ENCODE measurements at regions of chr14 and their contacts with region 1.

Region 1: GRCh38 chr14:21987937-21988336 is 314.3 kb upstream of the OR4E1 start:
- DNase-seq: peak; percentile 52
- H3K4me3 Mint-ChIP-seq: no peak overlapping the region
- H3K27ac Mint-ChIP-seq: no peak overlapping the region
- H3K4me1 Mint-ChIP-seq: no peaks in the 10 kb centered on the region
- H3K27me3 Mint-ChIP-seq: peaks cover 76% of the 10 kb centered on the region
- CTCF ChIP-seq: peak; percentile 28

Region 2: DNA sequence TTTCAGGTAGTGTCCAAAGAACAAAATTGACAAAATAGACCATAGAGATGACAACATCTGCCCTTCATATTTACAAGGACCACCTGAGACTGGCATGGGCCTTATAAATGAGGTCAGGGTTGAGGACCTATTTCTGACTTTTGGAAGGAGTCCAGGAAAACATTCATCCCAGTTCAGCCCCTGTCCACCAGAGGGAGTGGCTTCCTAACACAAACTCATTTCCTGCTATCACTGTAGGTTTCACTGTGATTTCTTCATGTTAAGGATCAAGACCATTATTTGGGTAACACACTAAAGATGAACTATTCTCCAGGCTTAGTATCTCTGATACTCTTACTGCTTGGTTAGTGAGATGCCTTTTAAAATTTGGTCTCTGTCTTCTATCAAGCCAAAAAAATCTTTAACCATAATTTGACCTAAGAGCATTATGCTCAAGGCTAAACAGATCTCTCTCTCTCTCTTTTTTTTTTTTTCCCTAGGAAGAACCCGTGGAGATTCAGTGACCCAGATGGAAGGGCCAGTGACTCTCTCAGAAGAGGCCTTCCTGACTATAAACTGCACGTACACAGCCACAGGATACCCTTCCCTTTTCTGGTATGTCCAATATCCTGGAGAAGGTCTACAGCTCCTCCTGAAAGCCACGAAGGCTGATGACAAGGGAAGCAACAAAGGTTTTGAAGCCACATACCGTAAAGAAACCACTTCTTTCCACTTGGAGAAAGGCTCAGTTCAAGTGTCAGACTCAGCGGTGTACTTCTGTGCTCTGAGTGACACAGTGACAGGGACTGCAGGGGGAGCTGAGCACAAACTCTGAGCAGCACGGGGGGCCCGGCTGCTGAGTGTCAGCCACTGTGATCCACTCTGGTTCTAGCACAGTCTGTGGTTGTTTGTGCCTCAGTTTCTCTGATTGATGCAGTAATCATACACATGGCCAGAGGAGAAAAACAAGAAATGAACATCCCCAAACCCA is 46.8 kb before region 1 on chr14:
- CTCF ChIA-PET with region 1: no interaction called
- POLR2A ChIA-PET with region 1: no interaction called
- intact Hi-C with region 1: no loop called
- DNase-seq: peak; percentile 52
- H3K4me3 Mint-ChIP-seq: no peak overlapping the region
- H3K27ac Mint-ChIP-seq: no peak overlapping the region
- H3K4me1 Mint-ChIP-seq: no peaks in the 10 kb centered on the region
- H3K27me3 Mint-ChIP-seq: peaks cover 88% of the 10 kb centered on the region
- CTCF ChIP-seq: peak; percentile 40

Region 3: DNA sequence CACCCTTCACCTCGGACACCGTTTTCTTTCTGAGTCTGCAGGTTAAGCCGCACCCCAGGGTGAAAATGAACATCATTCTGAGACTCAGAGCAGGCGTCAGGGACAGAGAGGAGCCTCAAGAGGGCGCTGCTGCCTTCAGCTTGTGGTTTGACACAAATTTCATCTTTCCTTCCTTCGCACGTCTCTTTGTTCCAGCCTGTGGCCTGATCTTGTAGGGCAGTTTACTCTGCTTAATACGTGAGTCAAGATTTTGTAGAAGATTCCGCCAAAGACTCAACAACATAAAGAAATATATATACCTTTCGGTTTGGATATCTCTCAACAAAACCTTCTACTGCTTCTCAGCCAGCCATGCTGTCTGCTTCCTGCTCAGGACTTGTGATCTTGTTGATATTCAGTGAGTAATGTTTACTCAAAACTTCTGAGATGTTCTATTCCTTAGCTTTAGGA is 14.9 kb after region 1 on chr14:
- CTCF ChIA-PET with region 1: interaction called, 13 read pairs
- POLR2A ChIA-PET with region 1: no interaction called
- intact Hi-C with region 1: no loop called
- DNase-seq: peak; percentile 34
- H3K4me3 Mint-ChIP-seq: no peak overlapping the region
- H3K27ac Mint-ChIP-seq: no peak overlapping the region
- H3K4me1 Mint-ChIP-seq: no peaks in the 10 kb centered on the region
- H3K27me3 Mint-ChIP-seq: peaks cover 31% of the 10 kb centered on the region
- CTCF ChIP-seq: peak; percentile 16

Region 4: GRCh38 chr14:22052795-22053194 is 64.9 kb after region 1 on chr14:
- CTCF ChIA-PET with region 1: no interaction called
- POLR2A ChIA-PET with region 1: no interaction called
- intact Hi-C with region 1: no loop called
- DNase-seq: no peak
- H3K4me3 Mint-ChIP-seq: no peak overlapping the region
- H3K27ac Mint-ChIP-seq: no peak overlapping the region
- H3K4me1 Mint-ChIP-seq: no peaks in the 10 kb centered on the region
- H3K27me3 Mint-ChIP-seq: peaks cover 95% of the 10 kb centered on the region
- CTCF ChIP-seq: no peak

Region 5: DNA sequence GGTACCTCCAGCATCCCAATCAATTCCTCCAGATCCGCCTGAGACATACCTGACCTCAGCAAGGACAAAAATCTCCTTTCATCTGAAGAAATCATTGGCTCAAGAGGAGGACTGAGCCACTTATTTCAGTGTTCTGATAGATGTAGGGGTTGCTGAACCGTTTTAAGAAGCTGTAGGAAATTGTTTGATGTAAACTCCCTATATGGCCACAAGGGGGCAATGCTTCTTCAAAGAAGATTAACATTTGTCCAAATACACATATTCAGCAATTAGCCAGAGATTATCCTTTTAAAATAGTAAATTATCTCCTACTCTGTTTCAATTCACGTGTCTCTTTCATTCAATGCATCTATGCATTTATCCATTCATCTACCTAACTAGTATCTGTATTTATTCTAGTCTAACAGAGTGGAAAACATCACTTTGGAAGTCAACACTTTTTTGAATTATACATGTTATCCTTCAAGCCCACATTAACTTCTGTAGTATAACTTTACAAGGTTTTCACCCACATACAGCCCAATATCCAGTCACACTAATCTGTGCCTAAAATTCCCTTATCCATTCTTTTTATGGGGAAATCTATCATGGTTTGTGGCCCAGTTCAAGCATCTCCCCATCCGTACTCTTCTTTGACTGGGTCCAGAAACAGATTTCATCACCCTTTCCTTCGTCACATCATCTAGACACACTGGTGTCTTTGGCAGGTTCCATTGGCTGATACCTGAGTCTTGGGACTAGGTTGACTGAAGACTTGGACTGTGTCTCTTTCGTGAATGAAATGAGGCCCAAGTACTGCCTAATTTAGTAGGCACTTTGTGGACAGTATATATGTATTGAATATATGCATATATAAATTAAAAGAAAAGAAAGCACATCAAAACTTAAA is 96.7 kb after region 1 on chr14:
- CTCF ChIA-PET with region 1: interaction called, 3 read pairs
- POLR2A ChIA-PET with region 1: no interaction called
- intact Hi-C with region 1: loop called (anchors 5 kb)
- DNase-seq: peak; percentile 62
- H3K4me3 Mint-ChIP-seq: no peak overlapping the region
- H3K27ac Mint-ChIP-seq: no peak overlapping the region
- H3K4me1 Mint-ChIP-seq: peaks cover 5% of the 10 kb centered on the region
- H3K27me3 Mint-ChIP-seq: peaks cover 38% of the 10 kb centered on the region
- CTCF ChIP-seq: peak; percentile 66

Region 6: DNA sequence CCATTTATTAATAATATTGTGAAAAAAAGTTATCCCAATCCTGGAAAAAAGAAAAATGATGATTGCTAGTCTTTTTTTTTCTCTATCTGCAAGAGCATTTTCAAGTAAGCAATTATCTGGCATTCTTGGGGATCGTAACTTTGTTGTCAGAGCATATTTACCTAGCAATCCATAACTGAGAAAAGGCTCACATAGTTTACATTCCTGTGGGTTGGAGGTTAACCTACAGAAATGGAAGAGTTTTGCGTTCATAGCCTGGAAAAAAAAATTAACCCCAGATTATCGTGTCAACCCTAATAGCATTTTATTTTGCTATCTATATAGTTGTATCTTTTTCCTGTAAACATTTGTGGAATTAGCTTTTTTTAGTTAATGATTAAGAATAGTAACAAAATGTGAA is 308.8 kb after region 1 on chr14:
- CTCF ChIA-PET with region 1: no interaction called
- POLR2A ChIA-PET with region 1: no interaction called
- intact Hi-C with region 1: no loop called
- DNase-seq: no peak
- H3K4me3 Mint-ChIP-seq: no peak overlapping the region
- H3K27ac Mint-ChIP-seq: no peak overlapping the region
- H3K4me1 Mint-ChIP-seq: peaks cover 13% of the 10 kb centered on the region
- H3K27me3 Mint-ChIP-seq: no peaks in the 10 kb centered on the region
- CTCF ChIP-seq: no peak